Posterior vena cava (tissue), 2 donors: ENCODE measurements at regions of chr10 and their contacts with region 1.

Region 1: GRCh38 chr10:4498711-4499251 is 327.2 kb upstream of the AKR1E2 start:
- DNase-seq: no peak

Region 2: GRCh38 chr10:3389130-3389529 is 1109.7 kb before region 1 on chr10:
- intact Hi-C with region 1: no loop called
- DNase-seq: no peak

Region 3: GRCh38 chr10:4407783-4408182 is 91.0 kb before region 1 on chr10:
- intact Hi-C with region 1: no loop called
- DNase-seq: no peak

Region 4: GRCh38 chr10:4431114-4431863 is 67.5 kb before region 1 on chr10:
- intact Hi-C with region 1: loop called in 1 of 2 experiments (anchors 10 kb)
- DNase-seq: no peak

Region 5: DNA sequence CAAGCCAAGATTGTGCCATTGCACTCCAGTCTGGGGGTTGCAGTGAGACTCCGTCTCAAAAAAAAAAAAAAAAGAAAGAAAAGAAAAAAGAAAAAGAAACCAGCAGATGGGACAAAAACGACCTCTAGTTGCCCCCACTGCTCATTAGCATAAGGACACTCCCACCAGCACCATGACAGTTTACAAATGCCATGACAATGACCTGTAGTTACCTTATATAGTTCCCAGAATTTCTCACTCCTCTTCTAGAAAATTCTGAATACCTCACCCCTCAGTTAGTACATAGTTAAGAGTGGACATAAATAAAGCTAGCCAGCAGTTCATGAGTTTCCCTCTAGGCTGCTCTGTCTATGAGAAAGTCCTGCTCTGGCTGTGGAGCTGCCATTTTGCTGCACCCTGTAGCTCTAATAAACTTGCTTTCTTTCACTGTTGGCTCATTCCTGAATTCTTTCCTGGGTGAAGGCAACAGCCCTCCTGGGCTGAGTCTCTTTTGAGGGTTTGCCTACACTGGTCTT is 50.4 kb after region 1 on chr10:
- intact Hi-C with region 1: no loop called
- DNase-seq: no peak